Right ventricle myocardium inferior (tissue), 1 donor: ENCODE measurements at regions of chrX and their contacts with region 1.

Region 1: DNA sequence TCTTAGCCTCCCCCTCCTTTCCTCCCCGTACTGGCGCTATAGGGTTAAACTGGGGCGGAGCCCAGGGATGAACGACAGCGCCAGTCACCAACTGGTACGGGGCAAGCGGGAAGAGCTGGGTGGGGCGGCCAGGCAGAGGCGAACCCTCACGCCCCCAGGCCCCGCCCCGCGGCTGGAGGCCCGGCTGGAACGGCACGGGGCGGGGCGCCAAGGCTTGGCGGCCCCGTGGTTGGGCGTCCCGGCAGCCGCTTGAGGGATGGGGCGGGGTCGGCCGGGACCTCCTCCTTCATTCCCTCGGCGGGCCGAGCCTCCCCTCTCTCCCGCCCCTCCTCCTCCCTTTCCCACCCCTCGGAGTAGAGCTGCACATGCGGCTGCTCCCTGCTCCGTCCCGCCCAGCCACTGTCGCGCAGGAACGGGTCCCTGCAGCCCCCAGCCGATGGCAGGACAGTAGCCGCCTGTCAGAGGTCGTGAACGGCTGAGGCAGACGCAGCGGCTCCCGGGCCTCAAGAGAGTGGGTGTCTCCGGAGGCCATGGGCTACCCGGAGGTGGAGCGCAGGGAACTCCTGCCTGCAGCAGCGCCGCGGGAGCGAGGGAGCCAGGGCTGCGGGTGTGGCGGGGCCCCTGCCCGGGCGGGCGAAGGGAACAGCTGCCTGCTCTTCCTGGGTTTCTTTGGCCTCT is at the start of gene EDA:
- DNase-seq: peak; percentile 86
- ATAC-seq: peak; percentile 98
- total RNA-seq, gene EDA: 12.4 TPM

Region 2: GRCh38 chrX:69556060-69557011 is 59.6 kb before region 1 on chrX:
- intact Hi-C with region 1: no loop called
- DNase-seq: no peak
- ATAC-seq: peak; percentile 34

Region 3: GRCh38 chrX:70030301-70030767 is 414.4 kb after region 1 on chrX:
- intact Hi-C with region 1: loop called (anchors 5 kb)
- DNase-seq: no peak
- ATAC-seq: peak; percentile 81